Motor neuron (in vitro differentiated cells): ENCODE measurements at regions of chr2 and their contacts with region 1.

Region 1: DNA sequence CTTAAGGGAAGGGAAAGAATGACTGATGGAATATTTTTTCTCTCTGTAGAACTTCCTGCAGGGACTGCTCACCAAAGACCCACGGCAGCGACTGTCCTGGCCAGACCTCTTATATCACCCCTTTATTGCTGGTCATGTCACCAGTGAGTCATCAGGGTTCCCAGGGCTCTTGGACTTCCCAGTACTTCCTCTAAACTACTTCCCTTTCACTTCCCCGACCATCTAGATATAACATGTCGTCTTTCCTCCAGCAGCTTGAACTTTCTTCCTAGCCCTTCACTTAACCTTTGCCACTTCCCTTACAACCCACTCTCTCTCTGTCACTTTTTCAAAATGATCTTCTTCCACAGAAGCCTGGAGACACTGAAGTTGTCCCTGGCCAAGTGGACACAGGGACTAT is 7.2 kb downstream of the STK36 start:
- ATAC-seq: no peak
- H3K4me3 ChIP-seq: no peak overlapping the region
- H3K27ac ChIP-seq: no peak overlapping the region
- H3K4me1 ChIP-seq: no peaks in the 10 kb centered on the region

Region 2: GRCh38 chr2:218292048-218293014 is 386.8 kb before region 1 on chr2 and contains the start of gene TMBIM1:
- in situ Hi-C with region 1: loop called in 1 of 9 experiments (anchors 25 kb)
- ATAC-seq: peak; percentile 36 to 91 (median 67)
- H3K4me3 ChIP-seq: no peak within 1 kb of the TSS
- H3K27ac ChIP-seq: no peak within 1 kb of the TSS
- H3K4me1 ChIP-seq: peaks cover 0 to 3% of the 10 kb centered on the region in 2 donors
- total RNA-seq, gene TMBIM1: 0.54 to 276 (median 8.6) TPM

Region 3: GRCh38 chr2:218944759-218945404 is 265.8 kb after region 1 on chr2:
- in situ Hi-C with region 1: no loop called
- ATAC-seq: no peak
- H3K4me3 ChIP-seq: no peak overlapping the region
- H3K27ac ChIP-seq: no peak overlapping the region
- H3K4me1 ChIP-seq: no peaks in the 10 kb centered on the region